ENCODE measurements at regions of chr2 and their contacts with region 1.

Region 1: GRCh38 chr2:30165050-30165520 is 18.3 kb downstream of the YPEL5 start:
- DNase-seq: peak; percentile 57
- ATAC-seq: peak; percentile 99
- H3K4me3 ChIP-seq: no peak overlapping the region
- H3K27ac ChIP-seq: no peak overlapping the region
- H3K4me1 ChIP-seq: no peaks in the 10 kb centered on the region; the same call in 1 of the 2 replicates
- H3K27me3 ChIP-seq: peaks cover 0 to 2% of the 10 kb centered on the region in 2 experiments; a peak in 1 of 4 replicates
- CTCF ChIP-seq: peak; percentile 71 to 91 (median 89)
- EP300 ChIP-seq: no peak
- POLR2A ChIP-seq: no peak
- RAD21 ChIP-seq: peak; percentile 92

Region 2: DNA sequence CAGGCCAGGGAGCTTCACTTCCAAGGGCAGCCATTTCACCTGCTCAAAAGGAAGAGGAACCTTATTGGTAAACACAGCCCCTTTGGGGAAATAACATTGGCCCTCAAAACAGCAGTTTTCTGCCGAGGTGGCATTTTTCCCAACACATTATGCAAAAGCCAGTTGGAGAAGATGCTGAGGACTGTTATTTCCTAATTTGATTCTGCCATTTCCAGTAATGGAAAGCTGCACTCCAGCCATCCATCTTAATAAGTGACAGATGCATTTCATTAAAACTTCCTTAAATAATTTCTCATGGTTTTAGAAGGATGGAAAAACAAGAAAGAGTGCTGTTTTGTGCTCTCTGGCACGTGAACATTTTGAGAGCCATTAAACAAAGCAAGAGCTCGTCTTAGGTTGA is 187.8 kb before region 1 on chr2:
- CTCF ChIA-PET with region 1: no interaction called
- POLR2A ChIA-PET with region 1: no interaction called
- RAD21 ChIA-PET with region 1: no interaction called
- SMC1A ChIA-PET with region 1: no interaction called
- in situ Hi-C with region 1: no loop called
- intact Hi-C with region 1: no loop called
- DNase-seq: no peak
- ATAC-seq: no peak
- H3K4me3 ChIP-seq: no peak overlapping the region
- H3K27ac ChIP-seq: no peak overlapping the region
- H3K4me1 ChIP-seq: no peaks in the 10 kb centered on the region
- H3K27me3 ChIP-seq: peaks cover 0 to 3% of the 10 kb centered on the region in 2 experiments; a peak in 1 of 4 replicates
- CTCF ChIP-seq: no peak
- EP300 ChIP-seq: no peak
- POLR2A ChIP-seq: no peak
- RAD21 ChIP-seq: no peak

Region 3: DNA sequence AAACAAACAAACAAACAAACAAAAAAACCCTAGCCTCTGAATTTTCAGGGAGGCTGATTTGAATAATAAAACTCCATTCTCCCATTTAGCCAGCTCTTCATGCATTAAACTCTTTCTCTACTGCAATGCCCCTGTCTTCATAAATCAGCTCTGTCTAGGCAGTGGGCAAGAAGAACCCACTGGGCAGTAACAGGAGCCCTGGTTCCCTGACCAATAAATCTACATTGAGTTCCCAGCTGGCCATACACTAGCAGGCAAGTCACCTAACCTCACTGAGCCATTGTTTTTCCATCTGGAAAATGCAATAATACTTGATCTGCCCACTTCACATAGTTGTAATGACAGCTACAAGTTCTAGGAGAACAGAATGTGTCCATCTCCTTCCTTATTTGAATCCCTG is 75.9 kb before region 1 on chr2:
- CTCF ChIA-PET with region 1: interaction called, 14 read pairs
- POLR2A ChIA-PET with region 1: no interaction called
- RAD21 ChIA-PET with region 1: interaction called, 5 read pairs
- SMC1A ChIA-PET with region 1: interaction called, 7 read pairs
- in situ Hi-C with region 1: no loop called
- intact Hi-C with region 1: no loop called
- DNase-seq: no peak
- ATAC-seq: no peak
- H3K4me3 ChIP-seq: no peak overlapping the region
- H3K27ac ChIP-seq: no peak overlapping the region
- H3K4me1 ChIP-seq: no peaks in the 10 kb centered on the region
- H3K27me3 ChIP-seq: no peaks in the 10 kb centered on the region; a peak in 1 of 4 replicates
- CTCF ChIP-seq: no peak
- EP300 ChIP-seq: no peak
- POLR2A ChIP-seq: no peak
- RAD21 ChIP-seq: no peak

Region 4: DNA sequence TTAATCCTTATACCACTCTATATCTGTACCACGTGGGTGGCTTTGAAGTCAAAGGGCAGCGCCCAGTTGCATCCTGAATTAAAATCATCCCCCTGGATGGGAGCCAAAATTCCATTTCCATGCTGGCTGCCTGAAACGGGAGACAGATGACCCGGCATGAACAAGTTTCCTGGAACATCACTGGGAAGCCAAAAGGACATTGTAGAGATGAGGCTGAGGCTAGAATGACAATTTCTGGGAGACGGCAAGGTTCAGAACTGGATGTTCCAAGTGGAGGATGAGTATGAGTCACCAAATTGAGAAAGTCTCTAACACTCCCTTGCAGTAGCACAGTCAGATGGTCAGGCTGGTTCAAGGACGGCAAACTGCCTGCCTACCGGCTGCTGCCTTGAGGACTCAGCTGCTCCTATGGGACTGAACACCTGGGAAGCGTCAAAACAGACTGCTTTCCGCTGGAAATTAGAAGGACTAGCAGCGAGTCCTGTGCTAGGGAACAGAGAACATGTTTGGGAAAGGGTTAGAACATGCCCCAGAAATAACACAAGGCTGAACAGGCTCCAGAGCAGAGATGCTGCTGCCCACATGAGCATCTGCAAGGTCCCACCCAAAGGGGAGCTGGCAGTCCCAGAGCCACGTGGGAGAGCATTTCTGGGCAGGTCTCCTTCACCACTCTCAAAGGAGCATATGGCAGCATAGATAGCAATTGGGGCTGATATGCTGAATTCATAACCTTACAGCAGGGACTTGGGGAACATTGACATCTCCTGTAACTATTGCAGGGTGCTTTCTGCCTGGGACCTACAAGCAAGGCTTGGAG is 13.7 kb after region 1 on chr2:
- CTCF ChIA-PET with region 1: interaction called, 23 read pairs
- POLR2A ChIA-PET with region 1: no interaction called
- RAD21 ChIA-PET with region 1: interaction called, 11 read pairs
- SMC1A ChIA-PET with region 1: interaction called, 6 read pairs
- in situ Hi-C with region 1: no loop called
- intact Hi-C with region 1: no loop called
- DNase-seq: no peak
- ATAC-seq: no peak
- H3K4me3 ChIP-seq: no peak overlapping the region
- H3K27ac ChIP-seq: no peak overlapping the region
- H3K4me1 ChIP-seq: no peaks in the 10 kb centered on the region
- H3K27me3 ChIP-seq: no peaks in the 10 kb centered on the region; a peak in 1 of 4 replicates
- CTCF ChIP-seq: no peak
- EP300 ChIP-seq: no peak
- POLR2A ChIP-seq: no peak
- RAD21 ChIP-seq: no peak

Region 5: GRCh38 chr2:30208452-30208851 is 43.4 kb after region 1 on chr2:
- CTCF ChIA-PET with region 1: interaction called, 132 read pairs
- POLR2A ChIA-PET with region 1: interaction called, 11 read pairs
- RAD21 ChIA-PET with region 1: interaction called, 71 read pairs
- SMC1A ChIA-PET with region 1: interaction called, 62 read pairs
- in situ Hi-C with region 1: no loop called
- intact Hi-C with region 1: loop called (anchors 5 kb)
- DNase-seq: no peak
- ATAC-seq: peak; percentile 82
- H3K4me3 ChIP-seq: no peak overlapping the region
- H3K27ac ChIP-seq: no peak overlapping the region
- H3K4me1 ChIP-seq: peaks cover 2% of the 10 kb centered on the region
- H3K27me3 ChIP-seq: no peaks in the 10 kb centered on the region; a peak in 1 of 4 replicates
- CTCF ChIP-seq: peak; percentile 84 to 90 (median 88)
- EP300 ChIP-seq: no peak
- POLR2A ChIP-seq: no peak
- RAD21 ChIP-seq: peak; percentile 94

Region 6: GRCh38 chr2:30459140-30459539 is 294.1 kb after region 1 on chr2:
- CTCF ChIA-PET with region 1: interaction called, 10 read pairs
- POLR2A ChIA-PET with region 1: no interaction called
- RAD21 ChIA-PET with region 1: interaction called, 4 read pairs
- SMC1A ChIA-PET with region 1: no interaction called
- in situ Hi-C with region 1: no loop called
- intact Hi-C with region 1: no loop called
- DNase-seq: no peak
- ATAC-seq: no peak
- H3K4me3 ChIP-seq: no peak overlapping the region
- H3K27ac ChIP-seq: no peak overlapping the region
- H3K4me1 ChIP-seq: peaks cover 3% of the 10 kb centered on the region; the same call in 1 of the 2 replicates
- H3K27me3 ChIP-seq: no peaks in the 10 kb centered on the region
- CTCF ChIP-seq: no peak
- EP300 ChIP-seq: no peak
- POLR2A ChIP-seq: no peak
- RAD21 ChIP-seq: no peak

Region 7: GRCh38 chr2:30691948-30692828 is 527.1 kb after region 1 on chr2:
- CTCF ChIA-PET with region 1: interaction called, 53 read pairs
- POLR2A ChIA-PET with region 1: no interaction called
- RAD21 ChIA-PET with region 1: interaction called, 22 read pairs
- SMC1A ChIA-PET with region 1: interaction called, 11 read pairs
- in situ Hi-C with region 1: no loop called
- intact Hi-C with region 1: no loop called
- DNase-seq: no peak
- ATAC-seq: peak; percentile 85
- H3K4me3 ChIP-seq: no peak overlapping the region
- H3K27ac ChIP-seq: no peak overlapping the region
- H3K4me1 ChIP-seq: no peaks in the 10 kb centered on the region
- H3K27me3 ChIP-seq: no peaks in the 10 kb centered on the region; a peak in 1 of 4 replicates
- CTCF ChIP-seq: peak; percentile 13 to 36 (median 27); a peak in 4 of 6 replicates
- EP300 ChIP-seq: no peak
- POLR2A ChIP-seq: no peak
- RAD21 ChIP-seq: peak; percentile 70

Region 8: GRCh38 chr2:30979822-30980245 is 814.7 kb after region 1 on chr2:
- CTCF ChIA-PET with region 1: no interaction called
- POLR2A ChIA-PET with region 1: no interaction called
- RAD21 ChIA-PET with region 1: no interaction called
- SMC1A ChIA-PET with region 1: no interaction called
- in situ Hi-C with region 1: no loop called
- intact Hi-C with region 1: no loop called
- DNase-seq: no peak
- ATAC-seq: no peak
- H3K4me3 ChIP-seq: no peak overlapping the region
- H3K27ac ChIP-seq: no peak overlapping the region
- H3K4me1 ChIP-seq: no peaks in the 10 kb centered on the region
- H3K27me3 ChIP-seq: no peaks in the 10 kb centered on the region; a peak in 1 of 4 replicates
- CTCF ChIP-seq: no peak
- EP300 ChIP-seq: no peak
- POLR2A ChIP-seq: no peak
- RAD21 ChIP-seq: no peak